Dendritic cell treated with granulocyte-macrophage colony-stimulating factor and Interleukin-4, amounts not matched to agents 40 ng/mL and 50 ng/mL, for 4 days (primary cell): ENCODE measurements at regions of chr19 and their contacts with region 1.

Region 1: GRCh38 chr19:15195371-15196334 is 5.1 kb downstream of the NOTCH3 start:
- H3K4me3 Mint-ChIP-seq: peak overlapping the region; percentile 35
- H3K27ac Mint-ChIP-seq: no peak overlapping the region
- H3K4me1 Mint-ChIP-seq: peaks cover 35% of the 10 kb centered on the region
- H3K27me3 Mint-ChIP-seq: peaks cover 58% of the 10 kb centered on the region

Region 2: DNA sequence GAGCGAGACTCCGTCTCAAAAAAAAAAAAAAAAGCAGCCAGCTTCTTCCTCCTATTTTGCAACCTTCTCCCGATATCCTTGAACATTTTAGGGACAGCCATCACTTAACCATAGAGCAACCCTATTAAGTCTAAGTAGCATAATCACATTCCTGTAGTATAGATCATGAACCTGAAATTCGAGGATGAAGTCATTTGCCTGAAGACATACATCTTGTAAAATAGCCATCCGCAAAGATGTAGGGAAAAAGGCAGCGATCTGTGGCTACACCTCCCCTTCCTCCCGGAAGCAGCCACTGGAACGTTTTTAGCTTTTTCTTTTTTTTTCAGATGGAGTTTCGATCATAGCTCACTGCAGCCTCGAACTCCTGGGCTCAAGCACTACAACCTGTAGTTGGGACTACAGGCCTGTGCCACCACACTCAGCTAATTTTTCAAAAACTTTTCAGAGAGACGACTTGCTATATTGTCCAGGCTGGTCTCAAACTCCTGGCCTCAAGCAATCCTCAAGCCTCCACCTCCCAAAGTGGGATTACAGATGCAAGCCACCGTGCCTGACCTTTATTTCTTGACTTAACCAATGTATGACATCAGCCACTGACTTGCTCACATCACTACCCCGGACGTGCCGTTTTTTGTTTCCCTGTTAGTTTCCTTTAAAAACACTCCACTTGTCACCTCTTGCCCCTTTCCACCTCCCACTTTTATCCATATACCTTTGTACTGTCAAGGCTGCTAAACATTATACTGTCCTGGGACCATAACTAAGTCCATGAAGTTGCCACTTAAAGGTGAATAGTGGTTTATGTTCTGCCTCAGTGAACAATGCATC is 38.6 kb after region 1 on chr19:
- intact Hi-C with region 1: loop called (anchors 5 kb)
- H3K4me3 Mint-ChIP-seq: no peak overlapping the region
- H3K27ac Mint-ChIP-seq: peak overlapping the region; percentile 84
- H3K4me1 Mint-ChIP-seq: peaks cover 68% of the 10 kb centered on the region
- H3K27me3 Mint-ChIP-seq: peaks cover 24% of the 10 kb centered on the region

Region 3: GRCh38 chr19:15297416-15298224 is 102.0 kb after region 1 on chr19:
- intact Hi-C with region 1: no loop called
- H3K4me3 Mint-ChIP-seq: peak overlapping the region; percentile 9
- H3K27ac Mint-ChIP-seq: no peak overlapping the region
- H3K4me1 Mint-ChIP-seq: peaks cover 96% of the 10 kb centered on the region
- H3K27me3 Mint-ChIP-seq: no peaks in the 10 kb centered on the region